ENCODE measurements at regions of chr20 and their contacts with region 1.

Region 1: GRCh38 chr20:4067600-4068261 is 52.4 kb upstream of the RNF24 start:
- DNase-seq: peak; percentile 57 to 75
- H3K4me3 ChIP-seq: no peak overlapping the region
- H3K27ac ChIP-seq: no peak overlapping the region
- H3K4me1 ChIP-seq: peaks cover 22% of the 10 kb centered on the region
- H3K27me3 ChIP-seq: no peaks in the 10 kb centered on the region
- CTCF ChIP-seq: no peak

Region 2: DNA sequence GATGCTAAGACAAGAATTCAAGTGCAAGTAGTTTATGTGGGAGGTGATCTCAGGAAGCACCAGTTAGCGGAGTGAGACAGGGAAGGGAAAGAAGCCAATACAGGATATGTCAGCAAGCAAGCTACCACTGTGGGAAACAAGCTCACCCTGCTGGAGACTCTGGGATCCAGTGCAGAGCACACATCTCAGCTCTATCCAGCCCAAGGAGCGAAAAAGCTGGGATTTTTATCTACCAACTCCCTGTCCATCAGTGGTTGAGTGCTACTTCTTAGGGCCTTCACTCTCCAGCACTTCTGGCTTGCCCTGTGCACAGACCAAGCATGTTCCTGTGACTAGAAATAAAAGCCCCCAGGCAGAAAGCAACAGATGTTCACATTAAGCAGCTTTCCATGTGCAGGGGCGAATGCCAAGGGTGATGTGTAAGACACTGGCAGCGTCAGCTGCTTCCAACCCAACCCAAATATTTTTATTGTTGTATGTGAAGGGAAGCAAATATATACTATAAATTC is 41.6 kb before region 1 on chr20:
- CTCF ChIA-PET with region 1: interaction called, 18 read pairs
- POLR2A ChIA-PET with region 1: no interaction called
- intact Hi-C with region 1: no loop called
- DNase-seq: no peak
- H3K4me3 ChIP-seq: no peak overlapping the region
- H3K27ac ChIP-seq: no peak overlapping the region
- H3K4me1 ChIP-seq: 0 out of 2 replicates have a peak, but pooled peaks cover 13% of the 10 kb centered on the region
- H3K27me3 ChIP-seq: no peaks in the 10 kb centered on the region
- CTCF ChIP-seq: no peak

Measured in PC-9 (cell line).